ENCODE measurements at regions of chr2 and their contacts with region 1.

Region 1: DNA sequence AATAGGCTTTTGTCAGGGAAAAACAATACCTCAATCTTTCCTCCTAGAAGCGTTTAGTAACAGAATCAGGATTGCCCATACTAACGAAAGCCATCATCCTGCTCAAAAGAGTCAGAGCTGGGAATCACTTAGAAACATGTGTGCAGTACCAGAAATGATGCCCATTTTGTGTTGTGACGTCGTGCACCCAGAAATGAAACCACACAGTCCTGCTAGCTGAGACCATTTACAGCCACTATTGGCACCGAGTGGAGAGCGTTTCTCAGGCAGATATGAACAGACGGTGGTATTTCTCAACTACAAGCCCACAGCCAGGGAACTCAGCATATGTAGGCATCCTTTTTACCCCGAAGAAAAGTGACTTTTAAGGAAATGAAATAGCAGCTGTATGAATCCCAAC is 284.3 kb upstream of the LRATD1 start:
- DNase-seq: no peak
- ATAC-seq: no peak
- H3K4me3 ChIP-seq: no peak overlapping the region
- H3K27ac ChIP-seq: no peak overlapping the region
- H3K4me1 ChIP-seq: no peaks in the 10 kb centered on the region
- H3K27me3 ChIP-seq: no peaks in the 10 kb centered on the region
- CTCF ChIP-seq: no peak

Region 2: DNA sequence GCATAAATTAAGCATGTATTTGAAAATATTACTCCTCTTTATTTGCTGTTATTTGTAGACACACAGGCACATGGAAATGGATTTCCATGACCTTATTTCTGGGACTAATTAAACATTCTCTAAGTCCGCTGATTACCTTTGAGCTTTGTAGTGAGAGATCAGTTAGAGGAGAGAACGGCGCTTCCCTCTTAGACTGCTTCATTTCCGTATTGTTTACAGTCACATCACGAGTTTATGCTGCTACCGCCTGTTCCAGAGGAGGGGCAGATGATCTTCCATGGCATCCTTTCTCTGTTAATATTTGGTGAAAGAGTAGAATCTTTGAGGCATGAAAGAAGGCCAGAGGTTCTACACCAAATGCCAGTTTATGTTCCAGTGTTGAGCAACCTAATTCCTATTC is 1227.2 kb before region 1 on chr2:
- intact Hi-C with region 1: loop called in 1 of 10 experiments (anchors 5 kb)
- DNase-seq: no peak
- ATAC-seq: no peak
- H3K4me3 ChIP-seq: no peak overlapping the region
- H3K27ac ChIP-seq: no peak overlapping the region
- H3K4me1 ChIP-seq: no peaks in the 10 kb centered on the region
- H3K27me3 ChIP-seq: no peaks in the 10 kb centered on the region
- CTCF ChIP-seq: no peak

Region 3: GRCh38 chr2:14313341-14313740 is 34.9 kb before region 1 on chr2:
- intact Hi-C with region 1: no loop called
- DNase-seq: no peak
- ATAC-seq: no peak
- H3K4me3 ChIP-seq: no peak overlapping the region
- H3K27ac ChIP-seq: no peak overlapping the region
- H3K4me1 ChIP-seq: no peaks in the 10 kb centered on the region
- H3K27me3 ChIP-seq: no peaks in the 10 kb centered on the region
- CTCF ChIP-seq: no peak

Region 4: DNA sequence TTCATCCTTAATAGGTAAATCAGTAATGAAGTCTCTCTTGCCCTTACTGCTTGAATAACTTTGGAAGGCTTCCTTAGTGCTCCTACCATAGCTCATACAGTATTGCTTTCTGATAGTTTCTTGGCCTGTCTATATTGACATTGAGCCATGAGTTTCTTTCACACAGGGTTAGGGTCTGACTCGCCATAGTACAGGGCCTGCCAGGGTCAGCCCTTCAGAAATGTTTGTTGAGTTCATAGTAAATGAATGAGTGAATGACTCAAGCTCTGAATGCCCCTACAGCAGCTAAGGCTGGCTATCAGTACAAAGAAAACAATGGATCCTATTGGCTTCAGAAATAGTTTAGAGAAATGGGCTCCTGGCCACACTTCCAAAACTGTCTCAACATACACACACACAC is 219.3 kb after region 1 on chr2:
- intact Hi-C with region 1: no loop called
- DNase-seq: no peak
- ATAC-seq: no peak
- H3K4me3 ChIP-seq: no peak overlapping the region
- H3K27ac ChIP-seq: no peak overlapping the region
- H3K4me1 ChIP-seq: no peaks in the 10 kb centered on the region
- H3K27me3 ChIP-seq: peaks cover 0 to 4% (median 0%) of the 10 kb centered on the region in 7 donors
- CTCF ChIP-seq: no peak

Region 5: DNA sequence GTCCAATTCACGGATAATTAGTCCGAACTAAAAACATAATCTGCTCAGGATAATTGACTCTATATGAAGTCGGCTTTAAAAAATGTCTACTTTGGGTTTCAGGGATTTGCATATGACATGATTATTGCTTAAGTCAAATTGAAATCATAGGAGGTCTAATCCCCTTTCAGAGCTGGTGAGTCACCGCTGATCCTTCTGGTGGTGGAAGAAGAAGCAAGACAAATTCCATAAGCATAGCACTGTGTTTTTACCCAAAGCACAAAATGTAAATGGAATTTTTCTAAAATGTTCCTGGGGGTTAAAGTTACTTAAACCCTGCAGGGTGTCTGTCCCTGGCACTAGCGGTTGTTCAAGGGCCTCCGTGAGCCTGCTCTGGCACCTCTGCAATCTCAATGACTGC is 744.4 kb after region 1 on chr2:
- intact Hi-C with region 1: no loop called
- DNase-seq: no peak
- ATAC-seq: no peak
- H3K4me3 ChIP-seq: no peak overlapping the region
- H3K27ac ChIP-seq: no peak overlapping the region
- H3K4me1 ChIP-seq: no peaks in the 10 kb centered on the region
- H3K27me3 ChIP-seq: no peaks in the 10 kb centered on the region
- CTCF ChIP-seq: no peak